ENCODE measurements at regions of chr10 and their contacts with region 1.

Region 1: GRCh38 chr10:95430231-95430951 is 130.8 kb downstream of the SORBS1 start:
- DNase-seq: peak; percentile 23
- H3K4me3 Mint-ChIP-seq: no peak overlapping the region
- H3K27ac Mint-ChIP-seq: no peak overlapping the region
- H3K4me1 Mint-ChIP-seq: no peaks in the 10 kb centered on the region
- H3K27me3 Mint-ChIP-seq: peaks cover 6% of the 10 kb centered on the region

Region 2: GRCh38 chr10:95374597-95375209 is 55.7 kb before region 1 on chr10:
- intact Hi-C with region 1: loop called (anchors 1 kb)
- DNase-seq: peak; percentile 59
- H3K4me3 Mint-ChIP-seq: no peak overlapping the region
- H3K27ac Mint-ChIP-seq: no peak overlapping the region
- H3K4me1 Mint-ChIP-seq: peaks cover 14% of the 10 kb centered on the region
- H3K27me3 Mint-ChIP-seq: peaks cover 9% of the 10 kb centered on the region